Activated CD8-positive, alpha-beta T cell treated with anti-CD3 and anti-CD28 coated beads for 36 hours (primary cell): ENCODE measurements at regions of chr3 and their contacts with region 1.

Region 1: GRCh38 chr3:39288300-39288808 is 8.5 kb upstream of the CX3CR1 start:
- DNase-seq: peak; percentile 92
- ATAC-seq: peak; percentile 98
- H3K4me3 Mint-ChIP-seq: no peak overlapping the region
- H3K27ac Mint-ChIP-seq: peak overlapping the region; percentile 4
- H3K4me1 Mint-ChIP-seq: peaks cover 30% of the 10 kb centered on the region
- H3K27me3 Mint-ChIP-seq: no peaks in the 10 kb centered on the region
- CTCF ChIP-seq: peak; percentile 92

Region 2: DNA sequence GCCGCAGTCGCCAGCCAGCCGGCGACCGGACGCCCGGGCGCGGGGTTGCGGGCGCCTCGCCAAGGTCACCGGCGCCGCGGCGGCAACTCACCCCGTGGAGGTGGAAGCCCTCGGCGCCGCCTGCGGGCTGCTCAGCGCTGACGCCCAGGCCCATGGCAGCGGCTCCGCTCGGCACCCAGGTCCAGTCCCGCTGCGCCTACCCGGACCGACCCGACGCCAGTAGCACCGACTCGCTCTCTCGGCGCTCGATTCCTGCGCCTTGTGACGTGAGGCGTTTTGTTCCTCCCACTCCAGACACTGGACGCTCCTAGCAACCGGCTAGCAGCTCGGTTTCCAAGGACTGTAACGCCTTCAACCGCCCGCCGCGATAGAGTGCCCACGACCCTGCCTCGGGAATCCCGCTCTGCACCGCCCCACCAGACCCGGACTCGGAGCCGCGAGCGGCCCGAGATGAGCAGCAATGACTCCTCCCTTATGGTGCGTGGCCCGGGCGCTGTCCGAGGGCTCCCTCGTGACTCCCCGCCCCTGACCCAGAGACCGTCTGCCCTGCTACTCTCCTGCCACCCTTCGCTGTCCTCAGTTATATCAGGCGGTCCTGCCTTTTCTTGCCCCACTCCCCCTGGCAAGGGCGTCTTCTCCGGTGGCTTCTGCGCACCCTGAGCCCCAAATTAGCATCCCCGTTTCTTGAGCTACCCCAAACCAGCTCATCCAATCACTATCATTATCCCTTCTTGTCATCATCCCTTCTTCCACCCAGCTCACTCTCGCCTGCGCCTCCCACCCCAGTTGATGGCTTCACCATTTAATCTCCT is 180.8 kb before region 1 on chr3 and contains the starts of genes GORASP1 and TTC21A:
- CTCF ChIA-PET with region 1: interaction called, 50 read pairs
- POLR2A ChIA-PET with region 1: no interaction called
- intact Hi-C with region 1: loop called (anchors 5 kb)
- DNase-seq: peak; percentile 72
- ATAC-seq: peak; percentile 47
- H3K4me3 Mint-ChIP-seq: peak within 1 kb of the TSS; percentile 87
- H3K27ac Mint-ChIP-seq: peak within 1 kb of the TSS; percentile 68
- H3K4me1 Mint-ChIP-seq: peaks cover 35% of the 10 kb centered on the region
- H3K27me3 Mint-ChIP-seq: no peaks in the 10 kb centered on the region
- CTCF ChIP-seq: no peak
- total RNA-seq, gene GORASP1: 16.2 to 18.3 TPM
- total RNA-seq, gene TTC21A: 0.69 to 0.79 TPM

Region 3: DNA sequence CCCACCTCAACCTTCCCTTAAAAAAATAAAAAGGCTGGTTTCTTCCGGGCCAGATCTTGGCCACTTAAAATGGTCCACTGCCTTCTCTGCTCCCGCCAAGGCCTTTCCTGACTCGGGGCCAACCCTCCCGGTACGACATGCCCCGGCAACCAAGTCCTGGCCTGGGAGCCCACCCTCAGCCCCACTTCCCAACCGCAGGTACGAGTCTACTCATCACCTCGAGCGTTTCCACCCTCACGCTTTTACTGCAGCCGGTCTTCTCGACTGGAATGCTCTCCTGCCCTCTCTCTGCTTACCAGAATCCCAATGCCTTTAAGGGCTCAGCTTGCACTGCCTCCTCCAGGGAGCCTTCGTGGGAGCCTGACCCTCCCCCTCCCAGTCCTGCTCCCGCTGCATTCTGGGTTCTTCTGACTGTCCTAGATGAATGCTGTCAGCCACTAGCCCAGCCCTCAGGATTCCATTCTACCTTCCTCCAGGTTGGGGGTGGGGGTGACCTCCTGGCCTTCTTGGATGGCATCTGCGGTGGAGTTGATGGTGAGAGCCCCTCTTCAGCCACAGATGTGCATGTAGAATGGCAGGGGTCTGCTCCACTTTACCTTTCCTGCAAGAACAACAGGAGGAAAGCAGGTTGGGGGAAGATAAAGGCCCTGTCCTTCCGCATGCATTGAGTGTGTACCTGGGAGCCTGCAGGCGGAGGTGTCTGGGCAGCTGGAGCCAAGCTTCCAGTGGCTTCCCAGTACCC is 133.9 kb before region 1 on chr3:
- CTCF ChIA-PET with region 1: interaction called, 14 read pairs
- POLR2A ChIA-PET with region 1: interaction called, 3 read pairs
- intact Hi-C with region 1: no loop called
- DNase-seq: no peak
- ATAC-seq: no peak
- H3K4me3 Mint-ChIP-seq: peak overlapping the region; percentile 70
- H3K27ac Mint-ChIP-seq: peak overlapping the region; percentile 76
- H3K4me1 Mint-ChIP-seq: peaks cover 43% of the 10 kb centered on the region
- H3K27me3 Mint-ChIP-seq: peaks cover 1% of the 10 kb centered on the region
- CTCF ChIP-seq: no peak

Region 4: GRCh38 chr3:39189959-39190269 is 98.4 kb before region 1 on chr3:
- CTCF ChIA-PET with region 1: interaction called, 754 read pairs
- POLR2A ChIA-PET with region 1: interaction called, 8 read pairs
- intact Hi-C with region 1: loop called (anchors 1 kb)
- DNase-seq: peak; percentile 65
- ATAC-seq: peak; percentile 60
- H3K4me3 Mint-ChIP-seq: no peak overlapping the region
- H3K27ac Mint-ChIP-seq: no peak overlapping the region
- H3K4me1 Mint-ChIP-seq: peaks cover 26% of the 10 kb centered on the region
- H3K27me3 Mint-ChIP-seq: no peaks in the 10 kb centered on the region
- CTCF ChIP-seq: peak; percentile 80

Region 5: DNA sequence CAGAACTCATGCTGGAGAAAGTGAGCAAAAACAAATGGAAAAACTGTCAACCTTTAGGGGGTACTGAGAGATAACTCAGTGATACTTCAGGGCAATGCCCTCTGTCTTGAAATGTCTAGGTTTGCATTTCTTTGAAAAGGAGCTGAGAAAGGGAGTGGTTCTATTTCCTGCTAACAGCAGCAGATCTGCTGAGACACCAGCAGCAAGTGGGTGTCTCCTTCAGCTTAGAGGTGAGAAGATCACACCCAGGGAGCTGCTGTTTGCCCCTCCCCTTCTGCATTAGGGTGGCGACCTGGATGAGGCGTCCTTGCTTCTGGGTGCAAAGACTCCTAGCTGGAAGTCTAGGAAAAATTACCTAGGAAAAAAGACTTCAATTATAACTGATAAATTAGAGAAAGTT is 53.6 kb before region 1 on chr3:
- CTCF ChIA-PET with region 1: interaction called, 15 read pairs
- POLR2A ChIA-PET with region 1: no interaction called
- intact Hi-C with region 1: no loop called
- DNase-seq: peak; percentile 46
- ATAC-seq: peak; percentile 96
- H3K4me3 Mint-ChIP-seq: no peak overlapping the region
- H3K27ac Mint-ChIP-seq: peak overlapping the region; percentile 64
- H3K4me1 Mint-ChIP-seq: peaks cover 14% of the 10 kb centered on the region
- H3K27me3 Mint-ChIP-seq: peaks cover 7% of the 10 kb centered on the region
- CTCF ChIP-seq: no peak

Region 6: DNA sequence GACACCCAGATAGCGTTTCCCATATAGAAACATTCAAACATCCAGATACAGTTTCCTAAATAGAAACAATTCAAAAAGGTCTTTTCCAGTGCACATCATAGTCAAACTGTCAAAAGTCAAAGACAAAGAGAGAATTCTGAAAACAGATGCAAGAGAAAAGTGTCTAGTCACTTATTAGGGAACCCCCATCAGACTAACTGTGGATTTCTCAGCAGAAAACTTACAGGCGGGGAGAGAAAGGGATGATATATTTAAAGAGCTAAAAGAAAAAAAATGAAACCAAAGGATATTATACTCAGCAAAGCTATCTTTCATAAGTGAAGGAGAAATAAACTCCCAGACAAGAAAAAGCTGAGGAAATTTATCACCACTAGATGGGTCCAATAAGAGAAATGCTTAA is 13.8 kb after region 1 on chr3:
- CTCF ChIA-PET with region 1: interaction called, 19 read pairs
- POLR2A ChIA-PET with region 1: no interaction called
- intact Hi-C with region 1: no loop called
- DNase-seq: no peak
- ATAC-seq: no peak
- H3K4me3 Mint-ChIP-seq: no peak overlapping the region
- H3K27ac Mint-ChIP-seq: no peak overlapping the region
- H3K4me1 Mint-ChIP-seq: no peaks in the 10 kb centered on the region
- H3K27me3 Mint-ChIP-seq: peaks cover 5% of the 10 kb centered on the region
- CTCF ChIP-seq: no peak